Prostate gland (tissue), 2 donors: ENCODE measurements at regions of chr2 and their contacts with region 1.

Region 1: GRCh38 chr2:216698895-216699294 is 3.5 kb upstream of the IGFBP5 start:
- DNase-seq: peak; percentile 36
- H3K4me3 ChIP-seq: no peak overlapping the region
- H3K27ac ChIP-seq: peak overlapping the region in 1 of 2 donors; percentile 12
- H3K4me1 ChIP-seq: peaks cover 6% of the 10 kb centered on the region
- H3K27me3 ChIP-seq: no peaks in the 10 kb centered on the region
- CTCF ChIP-seq: peak; percentile 33 to 72 (median 58)
- POLR2A ChIP-seq: no peak

Region 2: GRCh38 chr2:217360781-217361482 is 662.0 kb after region 1 on chr2:
- intact Hi-C with region 1: loop called (anchors 2 kb)
- DNase-seq: peak; percentile 21
- H3K4me3 ChIP-seq: no peak overlapping the region
- H3K27ac ChIP-seq: peak overlapping the region; percentile 29 to 56
- H3K4me1 ChIP-seq: peaks cover 3% of the 10 kb centered on the region
- H3K27me3 ChIP-seq: no peaks in the 10 kb centered on the region
- CTCF ChIP-seq: no peak
- POLR2A ChIP-seq: no peak

Region 3: GRCh38 chr2:217510771-217511291 is 811.9 kb after region 1 on chr2:
- intact Hi-C with region 1: loop called (anchors 2 kb)
- DNase-seq: peak; percentile 64
- H3K4me3 ChIP-seq: no peak overlapping the region
- H3K27ac ChIP-seq: no peak overlapping the region
- H3K4me1 ChIP-seq: no peaks in the 10 kb centered on the region
- H3K27me3 ChIP-seq: no peaks in the 10 kb centered on the region
- CTCF ChIP-seq: peak; percentile 40 to 87 (median 74)
- POLR2A ChIP-seq: no peak

Region 4: GRCh38 chr2:217713395-217714286 is 1014.7 kb after region 1 on chr2:
- intact Hi-C with region 1: loop called (anchors 2 kb)
- DNase-seq: peak; percentile 64
- H3K4me3 ChIP-seq: no peak overlapping the region
- H3K27ac ChIP-seq: peak overlapping the region; percentile 52 to 54
- H3K4me1 ChIP-seq: no peaks in the 10 kb centered on the region
- H3K27me3 ChIP-seq: no peaks in the 10 kb centered on the region
- CTCF ChIP-seq: peak; percentile 85 to 97 (median 93)
- POLR2A ChIP-seq: no peak